CD14-positive monocyte (primary cell): ENCODE measurements at regions of chr3 and their contacts with region 1.

Region 1: DNA sequence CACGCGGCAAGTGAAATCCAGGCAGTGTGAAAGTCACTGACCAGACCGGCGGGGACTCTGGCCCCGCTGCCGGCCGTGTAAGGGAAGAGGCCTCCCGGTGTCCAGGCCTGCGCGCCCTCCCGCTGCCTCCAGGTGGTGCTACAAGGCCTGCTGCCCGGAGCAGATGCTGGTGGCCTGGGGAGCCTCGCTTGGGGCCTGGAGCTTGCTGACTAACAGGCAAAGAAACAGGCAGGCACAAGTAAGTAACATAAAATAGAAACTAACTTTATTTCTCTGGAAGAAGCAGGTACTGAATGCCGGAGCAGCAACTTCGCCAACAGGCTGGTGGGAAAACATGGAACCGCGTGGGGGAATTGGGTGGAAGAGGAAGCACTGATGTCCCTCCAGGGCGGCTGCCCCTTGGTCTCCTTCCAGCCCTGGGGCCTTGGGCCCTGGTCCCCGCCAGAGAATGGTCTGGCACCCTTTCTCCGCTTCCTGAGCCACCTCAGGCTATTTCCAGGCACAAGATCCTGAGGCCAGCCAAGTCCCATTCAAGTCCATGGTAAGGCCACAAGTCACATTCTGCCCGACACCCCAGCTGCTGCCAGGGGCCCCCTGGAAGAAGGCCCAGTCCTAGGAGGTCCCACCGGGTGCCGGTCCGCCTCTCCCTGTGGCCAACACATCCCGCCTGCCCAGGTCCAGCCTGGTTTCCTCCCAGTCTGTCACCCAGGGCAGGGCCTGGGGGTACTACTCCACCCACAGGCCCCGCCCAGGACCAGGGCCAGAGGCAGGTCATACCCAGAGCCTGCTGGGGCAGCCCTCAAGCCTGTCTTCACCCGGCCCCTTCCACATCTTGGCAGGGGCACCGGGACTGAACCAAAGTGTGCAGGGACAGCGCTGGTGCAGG is 45.0 kb downstream of the TNK2 start:
- DNase-seq: peak; percentile 64 to 73 (median 64)
- H3K4me3 ChIP-seq: no peak overlapping the region
- H3K4me3 Mint-ChIP-seq: no peak overlapping the region
- H3K27ac ChIP-seq: peak overlapping the region in 1 of 2 donors; percentile 16
- H3K27ac Mint-ChIP-seq: peak overlapping the region in 2 of 7 donors; percentile 64 to 69
- H3K4me1 ChIP-seq: peaks cover 4% of the 10 kb centered on the region in 2 donors
- H3K4me1 Mint-ChIP-seq: peaks cover 16% of the 10 kb centered on the region
- H3K27me3 ChIP-seq: no peaks in the 10 kb centered on the region
- H3K27me3 Mint-ChIP-seq: peaks cover 2 to 14% (median 10%) of the 10 kb centered on the region in 3 donors
- CTCF ChIP-seq: peak; percentile 85

Region 2: GRCh38 chr3:195886181-195887141 is 23.1 kb after region 1 on chr3:
- intact Hi-C with region 1: loop called in 1 of 2 experiments (anchors 2 kb)
- DNase-seq: no peak
- H3K4me3 ChIP-seq: no peak overlapping the region
- H3K4me3 Mint-ChIP-seq: no peak overlapping the region
- H3K27ac ChIP-seq: no peak overlapping the region
- H3K27ac Mint-ChIP-seq: peak overlapping the region in 4 of 7 donors; percentile 25 to 59 (median 42)
- H3K4me1 ChIP-seq: no peaks in the 10 kb centered on the region
- H3K4me1 Mint-ChIP-seq: no peaks in the 10 kb centered on the region
- H3K27me3 ChIP-seq: no peaks in the 10 kb centered on the region
- H3K27me3 Mint-ChIP-seq: no peaks in the 10 kb centered on the region
- CTCF ChIP-seq: no peak

Region 3: DNA sequence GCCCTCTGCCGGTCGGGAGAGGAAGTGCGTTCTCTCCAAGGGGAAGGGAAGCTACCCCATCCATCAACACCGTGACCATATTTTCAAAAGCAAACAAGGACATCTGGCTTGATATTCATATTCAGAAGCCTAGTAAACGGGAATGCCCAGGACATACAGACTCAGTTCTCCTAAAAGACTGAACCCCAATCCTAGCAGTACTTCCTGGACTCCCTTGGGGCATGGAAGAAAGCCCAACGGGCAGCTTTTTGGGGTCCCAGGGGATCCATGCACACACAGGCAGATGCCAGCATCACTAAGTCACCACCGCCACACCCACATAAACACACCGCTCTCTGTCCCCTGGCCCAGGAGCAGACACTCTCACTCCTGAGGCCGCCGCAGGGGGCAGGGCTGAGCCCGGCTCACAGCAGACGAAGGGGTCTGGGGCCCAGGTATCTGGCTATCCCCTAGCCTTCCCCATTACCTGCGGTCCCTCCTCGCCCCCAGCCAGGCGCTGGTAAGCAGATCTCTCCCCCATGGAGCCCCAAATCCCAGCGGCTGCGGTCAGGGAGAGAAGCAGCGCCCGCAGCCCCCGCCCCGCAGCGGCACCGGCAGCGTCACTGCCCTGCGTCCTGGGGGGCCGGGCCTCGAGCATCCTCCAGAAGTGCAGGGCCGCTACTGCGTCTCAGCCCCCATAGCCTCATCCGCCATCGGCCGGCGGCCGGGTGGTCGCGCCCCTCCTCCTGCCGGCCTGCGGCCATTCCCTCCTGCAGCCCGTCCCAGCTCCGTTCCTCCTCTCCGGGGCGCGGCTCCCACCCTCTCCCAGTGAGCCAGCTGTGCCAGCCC is 31.6 kb after region 1 on chr3:
- intact Hi-C with region 1: loop called (anchors 1 to 2 kb)
- DNase-seq: peak; percentile 70 to 80 (median 77)
- H3K4me3 ChIP-seq: peak overlapping the region; percentile 47 to 84 (median 55)
- H3K4me3 Mint-ChIP-seq: peak overlapping the region; percentile 87 to 90
- H3K27ac ChIP-seq: peak overlapping the region; percentile 93 to 98
- H3K27ac Mint-ChIP-seq: peak overlapping the region; percentile 90 to 99 (median 93)
- H3K4me1 ChIP-seq: peaks cover 59 to 67% of the 10 kb centered on the region in 2 donors
- H3K4me1 Mint-ChIP-seq: peaks cover 54% of the 10 kb centered on the region
- H3K27me3 ChIP-seq: no peaks in the 10 kb centered on the region
- H3K27me3 Mint-ChIP-seq: no peaks in the 10 kb centered on the region
- CTCF ChIP-seq: peak; percentile 93

Region 4: DNA sequence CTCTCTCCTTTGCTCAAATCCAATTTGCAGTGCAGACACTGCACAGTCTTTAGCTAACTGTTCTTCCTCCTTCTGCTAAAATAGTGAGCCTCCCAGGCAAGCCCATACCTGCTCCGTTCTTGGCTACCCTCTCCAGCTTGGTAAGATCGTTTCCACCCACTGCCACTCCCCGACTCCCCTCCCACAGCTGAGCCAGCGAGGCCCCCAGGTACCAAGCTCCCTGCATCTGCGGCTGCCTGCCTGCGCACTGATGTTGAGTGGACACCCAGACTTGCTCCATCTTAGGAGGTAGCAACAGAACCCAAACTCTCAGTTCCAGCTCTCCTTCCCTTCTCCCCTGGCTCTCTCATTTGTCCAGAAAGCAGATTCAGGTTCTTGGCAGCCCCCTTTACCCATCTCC is 52.9 kb after region 1 on chr3:
- intact Hi-C with region 1: loop called (anchors 1 kb)
- DNase-seq: no peak
- H3K4me3 ChIP-seq: no peak overlapping the region
- H3K4me3 Mint-ChIP-seq: peak overlapping the region in 1 of 2 donors; percentile 26
- H3K27ac ChIP-seq: no peak overlapping the region
- H3K27ac Mint-ChIP-seq: no peak overlapping the region
- H3K4me1 ChIP-seq: peaks cover 4 to 6% of the 10 kb centered on the region in 2 donors
- H3K4me1 Mint-ChIP-seq: peaks cover 9% of the 10 kb centered on the region
- H3K27me3 ChIP-seq: no peaks in the 10 kb centered on the region
- H3K27me3 Mint-ChIP-seq: peaks cover 12 to 24% (median 18%) of the 10 kb centered on the region in 3 donors
- CTCF ChIP-seq: no peak